ENCODE measurements at regions of chr14 and their contacts with region 1.

Region 1: GRCh38 chr14:81261176-81261575 is 40.4 kb upstream of the GTF2A1 start:
- DNase-seq: no peak
- ATAC-seq: no peak
- H3K4me3 ChIP-seq: no peak overlapping the region
- H3K27ac ChIP-seq: no peak overlapping the region
- H3K4me1 ChIP-seq: no peaks in the 10 kb centered on the region
- H3K27me3 ChIP-seq: no peaks in the 10 kb centered on the region
- CTCF ChIP-seq: no peak
- POLR2A ChIP-seq: no peak
- RAD21 ChIP-seq: no peak

Region 2: DNA sequence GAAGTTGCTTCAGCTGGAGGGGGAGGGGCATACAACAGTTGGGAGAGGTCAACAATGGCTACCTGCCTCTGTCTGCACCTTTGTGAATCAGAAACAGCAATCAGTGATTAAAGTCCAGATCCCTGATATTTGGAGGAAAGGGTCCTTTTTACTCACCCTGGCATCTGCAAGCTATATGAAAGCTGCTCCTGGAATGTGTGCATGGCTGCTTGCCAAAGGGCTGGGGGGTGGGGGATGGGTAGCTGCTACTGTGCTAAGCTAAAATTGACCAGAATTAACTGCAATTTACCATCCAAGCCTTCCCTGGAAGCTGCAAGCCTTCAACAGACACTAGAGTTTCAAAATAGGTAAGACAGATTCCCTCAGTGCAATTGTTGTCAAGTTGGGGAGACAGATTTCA is 26.9 kb before region 1 on chr14:
- CTCF ChIA-PET with region 1: no interaction called
- POLR2A ChIA-PET with region 1: interaction called, 23 read pairs
- dilution Hi-C with region 1: no loop called
- in situ Hi-C with region 1: no loop called
- intact Hi-C with region 1: no loop called
- DNase-seq: no peak
- ATAC-seq: no peak
- H3K4me3 ChIP-seq: no peak overlapping the region
- H3K27ac ChIP-seq: no peak overlapping the region
- H3K4me1 ChIP-seq: no peaks in the 10 kb centered on the region
- H3K27me3 ChIP-seq: no peaks in the 10 kb centered on the region
- CTCF ChIP-seq: no peak
- POLR2A ChIP-seq: no peak
- RAD21 ChIP-seq: no peak

Measured in IMR-90 (cell line).